ENCODE measurements at regions of chr3 and their contacts with region 1.

Region 1: DNA sequence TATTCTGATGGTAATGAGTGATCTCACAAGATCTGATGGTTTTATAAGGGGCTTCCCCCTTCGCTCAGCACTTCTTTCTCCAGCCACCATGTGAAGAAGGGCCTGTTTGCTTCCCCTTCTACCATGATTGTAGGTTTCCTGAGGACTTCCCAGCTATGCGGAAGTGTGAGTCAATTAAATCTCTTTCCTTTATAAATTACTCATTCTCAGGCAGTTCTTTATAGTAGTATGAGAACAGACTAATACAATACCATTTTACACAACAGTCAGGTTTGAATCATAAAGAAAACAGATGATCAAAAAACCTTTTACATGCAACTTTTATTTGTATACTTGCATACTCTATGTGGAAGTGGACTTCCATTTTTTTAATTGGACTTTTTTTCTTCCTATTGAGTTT is 46.7 kb upstream of the CBLB start:
- DNase-seq: no peak
- H3K4me3 ChIP-seq: no peak overlapping the region
- H3K27ac ChIP-seq: no peak overlapping the region
- H3K4me1 ChIP-seq: no peaks in the 10 kb centered on the region
- H3K27me3 ChIP-seq: no peaks in the 10 kb centered on the region
- CTCF ChIP-seq: no peak
- POLR2A ChIP-seq: no peak

Region 2: DNA sequence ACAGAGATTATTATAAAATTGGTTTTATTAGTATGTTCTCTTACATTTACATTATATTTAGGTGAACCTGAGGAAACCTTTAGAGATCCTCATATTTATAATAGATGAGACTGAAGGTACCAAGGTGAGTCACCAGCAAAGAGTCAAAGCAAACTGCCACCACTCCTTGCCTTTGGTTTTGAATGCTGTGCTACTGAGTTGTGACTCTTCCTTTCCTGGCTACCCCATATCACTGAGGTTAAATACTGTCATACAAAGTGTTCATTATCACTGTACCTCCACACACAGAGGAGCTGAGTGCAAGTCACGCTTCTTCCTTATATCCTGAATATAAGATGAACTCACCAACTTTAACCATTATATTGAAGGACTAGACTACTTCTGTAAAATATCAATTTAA is 214.9 kb before region 1 on chr3:
- intact Hi-C with region 1: no loop called
- DNase-seq: no peak
- H3K4me3 ChIP-seq: no peak overlapping the region
- H3K27ac ChIP-seq: no peak overlapping the region
- H3K4me1 ChIP-seq: no peaks in the 10 kb centered on the region
- H3K27me3 ChIP-seq: no peaks in the 10 kb centered on the region
- CTCF ChIP-seq: no peak
- POLR2A ChIP-seq: no peak

Region 3: GRCh38 chr3:105876780-105877327 is 38.7 kb before region 1 on chr3:
- intact Hi-C with region 1: no loop called
- DNase-seq: no peak
- H3K4me3 ChIP-seq: no peak overlapping the region
- H3K27ac ChIP-seq: no peak overlapping the region
- H3K4me1 ChIP-seq: no peaks in the 10 kb centered on the region
- H3K27me3 ChIP-seq: no peaks in the 10 kb centered on the region
- CTCF ChIP-seq: no peak
- POLR2A ChIP-seq: no peak

Region 4: DNA sequence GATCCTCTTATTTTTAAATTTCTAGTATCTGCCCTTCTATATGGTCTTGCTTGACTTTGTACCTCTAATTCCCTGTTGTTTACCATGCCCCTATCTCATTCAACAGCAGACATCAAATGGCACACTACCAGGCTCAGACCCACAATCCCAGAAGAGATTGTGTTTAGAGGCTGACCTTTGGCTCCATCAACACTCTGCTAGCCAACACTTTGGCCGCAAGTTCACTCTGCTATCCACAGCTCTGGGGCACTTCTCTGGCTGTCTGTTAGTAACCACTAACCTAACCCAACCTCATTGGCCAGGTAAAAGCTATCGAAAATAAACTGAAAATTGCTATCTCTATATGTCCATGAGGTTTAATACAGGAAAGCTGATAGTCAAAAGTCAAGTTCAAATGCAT is 815.7 kb after region 1 on chr3:
- intact Hi-C with region 1: loop called (anchors 5 kb)
- DNase-seq: no peak
- H3K4me3 ChIP-seq: no peak overlapping the region
- H3K27ac ChIP-seq: no peak overlapping the region
- H3K4me1 ChIP-seq: no peaks in the 10 kb centered on the region
- H3K27me3 ChIP-seq: no peaks in the 10 kb centered on the region
- CTCF ChIP-seq: no peak
- POLR2A ChIP-seq: no peak